ENCODE measurements at regions of chr12 and their contacts with region 1.

Region 1: GRCh38 chr12:51871126-51871525 is 16.8 kb upstream of the ANKRD33 start:
- DNase-seq: no peak
- ATAC-seq: peak; percentile 28
- H3K4me3 ChIP-seq: no peak overlapping the region
- H3K4me3 Mint-ChIP-seq: no peak overlapping the region
- H3K27ac ChIP-seq: no peak overlapping the region
- H3K27ac Mint-ChIP-seq: no peak overlapping the region
- H3K4me1 ChIP-seq: peaks cover 16 to 32% of the 10 kb centered on the region in 2 donors
- H3K4me1 Mint-ChIP-seq: peaks cover 19% of the 10 kb centered on the region
- H3K27me3 ChIP-seq: peaks cover 0 to 62% (median 28%) of the 10 kb centered on the region in 4 experiments
- H3K27me3 Mint-ChIP-seq: peaks cover 48% of the 10 kb centered on the region
- CTCF ChIP-seq: no peak

Region 2: GRCh38 chr12:51809193-51809592 is 61.9 kb before region 1 on chr12:
- CTCF ChIA-PET with region 1: no interaction called
- POLR2A ChIA-PET with region 1: no interaction called
- intact Hi-C with region 1: loop called (anchors 1 kb)
- DNase-seq: peak; percentile 23
- ATAC-seq: no peak
- H3K4me3 ChIP-seq: no peak overlapping the region
- H3K4me3 Mint-ChIP-seq: no peak overlapping the region
- H3K27ac ChIP-seq: no peak overlapping the region
- H3K27ac Mint-ChIP-seq: no peak overlapping the region
- H3K4me1 ChIP-seq: peaks cover 4 to 10% of the 10 kb centered on the region in 2 donors
- H3K4me1 Mint-ChIP-seq: peaks cover 11% of the 10 kb centered on the region
- H3K27me3 ChIP-seq: peaks cover 0 to 29% (median 13%) of the 10 kb centered on the region in 4 experiments
- H3K27me3 Mint-ChIP-seq: peaks cover 46% of the 10 kb centered on the region
- CTCF ChIP-seq: no peak

Region 3: DNA sequence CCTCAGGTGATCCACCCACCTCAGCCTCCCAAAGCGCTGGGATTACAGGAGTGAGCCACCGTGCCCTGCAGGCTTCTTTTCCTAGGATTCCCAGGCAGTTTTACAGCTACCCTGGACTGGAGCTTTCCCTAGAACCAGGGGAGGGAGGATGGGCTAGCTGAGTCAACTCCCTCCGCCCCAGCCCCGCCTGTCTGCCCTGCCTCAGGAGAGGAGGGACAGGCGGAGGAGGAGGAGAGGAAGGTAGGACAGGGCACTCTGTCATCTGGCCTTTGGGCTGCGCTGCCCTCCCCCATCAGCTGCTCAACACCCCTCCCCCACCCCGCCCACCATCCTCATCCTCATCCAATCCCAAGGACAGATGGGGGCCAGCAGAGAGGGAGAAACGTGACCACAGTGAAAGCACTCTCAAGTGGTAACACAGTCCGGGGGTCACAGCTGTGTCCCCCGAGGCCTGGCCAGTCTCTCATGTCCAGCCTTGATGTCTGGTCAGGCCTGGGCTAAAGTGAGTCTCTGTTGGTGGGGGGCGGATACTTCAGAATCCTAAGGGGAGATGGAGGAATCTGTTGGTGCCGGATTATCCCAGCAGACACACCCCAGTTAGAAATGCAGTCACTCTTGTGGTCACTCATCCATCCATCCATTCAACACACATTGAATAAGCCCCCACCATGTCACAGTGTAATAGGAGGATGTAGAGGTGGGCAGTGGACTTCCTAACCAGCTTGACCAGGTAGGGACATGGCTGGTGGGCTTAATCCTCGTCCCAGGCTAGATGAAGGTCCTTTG is 34.9 kb before region 1 on chr12:
- CTCF ChIA-PET with region 1: no interaction called
- POLR2A ChIA-PET with region 1: no interaction called
- intact Hi-C with region 1: no loop called
- DNase-seq: no peak
- ATAC-seq: no peak
- H3K4me3 ChIP-seq: no peak overlapping the region
- H3K4me3 Mint-ChIP-seq: no peak overlapping the region
- H3K27ac ChIP-seq: no peak overlapping the region
- H3K27ac Mint-ChIP-seq: no peak overlapping the region
- H3K4me1 ChIP-seq: peaks cover 8% of the 10 kb centered on the region in 2 donors
- H3K4me1 Mint-ChIP-seq: peaks cover 12% of the 10 kb centered on the region
- H3K27me3 ChIP-seq: peaks cover 0 to 49% (median 11%) of the 10 kb centered on the region in 4 experiments
- H3K27me3 Mint-ChIP-seq: peaks cover 48% of the 10 kb centered on the region
- CTCF ChIP-seq: no peak

Measured in B cell (primary cell).